ENCODE measurements at regions of chr14 and their contacts with region 1.

Region 1: GRCh38 chr14:51369814-51370213 is 129.8 kb downstream of the TMX1 start:
- DNase-seq: peak in 1 of 2 experiments; percentile 58
- H3K4me3 ChIP-seq: no peak overlapping the region
- H3K27ac ChIP-seq: no peak overlapping the region
- H3K4me1 ChIP-seq: peaks cover 0 to 5% (median 0%) of the 10 kb centered on the region in 4 experiments; a peak in 3 of 7 replicates
- H3K27me3 ChIP-seq: no peaks in the 10 kb centered on the region
- CTCF ChIP-seq: peak; percentile 50 to 68 (median 53)
- EP300 ChIP-seq: no peak
- POLR2A ChIP-seq: no peak
- RAD21 ChIP-seq: peak; percentile 77 to 81

Region 2: DNA sequence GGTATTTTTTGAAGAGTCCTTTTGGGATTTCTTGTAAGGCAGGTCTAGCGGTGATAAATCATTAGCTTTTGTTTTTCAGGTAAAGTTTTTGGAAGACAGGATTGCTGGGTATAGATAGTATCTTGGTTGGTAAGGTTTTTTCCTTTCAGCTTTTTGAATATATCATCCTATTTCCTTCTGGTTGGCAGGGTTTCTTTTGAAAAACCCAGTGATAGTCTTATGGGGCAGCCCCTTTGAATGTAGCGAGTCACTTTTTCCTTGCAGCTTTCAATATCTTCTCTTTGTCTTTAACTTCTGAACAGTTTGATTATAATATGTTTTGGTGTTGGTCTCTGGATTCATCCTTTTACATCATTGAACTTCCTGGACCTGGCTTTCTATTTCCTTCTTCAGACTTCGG is 109.6 kb before region 1 on chr14:
- CTCF ChIA-PET with region 1: no interaction called
- POLR2A ChIA-PET with region 1: no interaction called
- DNase-seq: no peak
- H3K4me3 ChIP-seq: no peak overlapping the region
- H3K27ac ChIP-seq: no peak overlapping the region
- H3K4me1 ChIP-seq: peaks cover 0 to 3% (median 0%) of the 10 kb centered on the region in 4 experiments; a peak in 1 of 7 replicates
- H3K27me3 ChIP-seq: no peaks in the 10 kb centered on the region
- CTCF ChIP-seq: no peak
- EP300 ChIP-seq: no peak
- POLR2A ChIP-seq: no peak
- RAD21 ChIP-seq: no peak

Region 3: GRCh38 chr14:51304941-51305340 is 64.9 kb before region 1 on chr14:
- CTCF ChIA-PET with region 1: no interaction called
- POLR2A ChIA-PET with region 1: no interaction called
- DNase-seq: no peak
- H3K4me3 ChIP-seq: no peak overlapping the region
- H3K27ac ChIP-seq: no peak overlapping the region
- H3K4me1 ChIP-seq: peaks cover 0 to 9% (median 1%) of the 10 kb centered on the region in 4 experiments; a peak in 3 of 7 replicates
- H3K27me3 ChIP-seq: no peaks in the 10 kb centered on the region
- CTCF ChIP-seq: no peak
- EP300 ChIP-seq: no peak
- POLR2A ChIP-seq: no peak
- RAD21 ChIP-seq: no peak

Region 4: DNA sequence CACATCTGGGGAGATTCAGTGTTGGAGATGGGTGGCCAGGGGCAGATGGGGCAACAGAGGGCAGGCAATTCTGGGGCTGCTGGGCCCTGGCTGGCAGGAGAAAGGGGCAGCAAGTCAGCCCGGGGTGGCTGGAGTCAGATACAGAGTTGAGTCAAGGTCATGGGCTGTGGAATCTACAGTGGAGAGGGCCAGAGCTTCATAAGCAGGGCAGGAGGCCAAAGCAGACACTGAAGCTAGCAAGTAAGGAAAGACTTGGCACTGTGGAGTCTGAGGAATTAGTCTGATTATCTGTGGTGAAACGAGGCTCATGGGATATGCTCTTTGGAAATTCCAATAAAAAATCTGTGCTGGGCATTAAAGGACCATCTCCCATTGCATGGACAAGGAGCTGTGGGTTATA is 34.3 kb before region 1 on chr14:
- CTCF ChIA-PET with region 1: no interaction called
- POLR2A ChIA-PET with region 1: no interaction called
- DNase-seq: no peak
- H3K4me3 ChIP-seq: no peak overlapping the region
- H3K27ac ChIP-seq: no peak overlapping the region
- H3K4me1 ChIP-seq: no peaks in the 10 kb centered on the region; a peak in 2 of 7 replicates
- H3K27me3 ChIP-seq: no peaks in the 10 kb centered on the region
- CTCF ChIP-seq: no peak
- EP300 ChIP-seq: no peak
- POLR2A ChIP-seq: no peak
- RAD21 ChIP-seq: no peak

Region 5: GRCh38 chr14:51382506-51382905 is 12.7 kb after region 1 on chr14:
- CTCF ChIA-PET with region 1: interaction called, 22 read pairs
- POLR2A ChIA-PET with region 1: no interaction called
- DNase-seq: no peak
- H3K4me3 ChIP-seq: no peak overlapping the region
- H3K27ac ChIP-seq: no peak overlapping the region
- H3K4me1 ChIP-seq: no peaks in the 10 kb centered on the region
- H3K27me3 ChIP-seq: peaks cover 0 to 1% (median 0%) of the 10 kb centered on the region in 4 experiments; a peak in 2 of 7 replicates
- CTCF ChIP-seq: no peak
- EP300 ChIP-seq: no peak
- POLR2A ChIP-seq: no peak
- RAD21 ChIP-seq: no peak